GM10248 (cell line): ENCODE measurements at regions of chr11 and their contacts with region 1.

Region 1: DNA sequence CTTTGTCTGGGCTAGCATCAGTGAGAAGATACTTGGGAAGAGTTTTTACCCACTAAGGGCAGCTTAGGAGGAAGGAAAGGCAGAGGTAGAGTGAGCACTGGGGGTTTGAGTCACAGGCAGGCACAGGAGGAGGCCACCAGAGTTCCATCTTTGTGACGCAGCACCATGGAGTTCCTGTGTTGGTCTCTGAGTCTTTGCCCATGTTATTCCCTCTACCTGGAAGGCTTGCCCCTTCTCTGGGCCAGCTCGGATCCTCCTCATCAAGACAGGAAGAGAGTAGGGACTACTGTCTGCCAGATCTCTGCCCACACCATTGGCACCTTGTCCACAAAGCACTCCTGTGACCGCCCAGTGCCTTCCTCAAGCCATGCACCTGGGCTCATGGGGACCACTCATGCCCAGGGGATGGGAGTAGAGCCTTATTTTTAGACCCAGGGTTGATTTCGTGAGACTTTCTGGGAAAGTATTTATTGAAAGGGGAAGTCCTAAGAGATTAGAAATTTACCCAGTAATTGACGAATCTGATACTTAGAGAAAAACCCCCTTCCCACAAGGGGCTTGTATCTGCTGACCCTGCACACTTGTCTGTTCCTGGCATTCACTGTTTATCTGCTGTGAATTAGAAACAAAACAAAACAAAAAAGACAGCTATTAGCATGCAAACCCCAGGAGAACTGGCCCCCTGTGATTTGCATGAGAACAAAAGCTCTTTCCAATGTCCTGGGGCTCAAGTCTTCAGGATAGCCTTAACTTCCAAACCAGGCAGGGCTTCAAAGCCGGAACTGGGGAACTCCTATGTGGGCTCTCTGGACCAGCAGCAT is 35.9 kb upstream of the MYEOV start:
- DNase-seq: peak; percentile 42
- CTCF ChIP-seq: peak; percentile 5

Region 2: DNA sequence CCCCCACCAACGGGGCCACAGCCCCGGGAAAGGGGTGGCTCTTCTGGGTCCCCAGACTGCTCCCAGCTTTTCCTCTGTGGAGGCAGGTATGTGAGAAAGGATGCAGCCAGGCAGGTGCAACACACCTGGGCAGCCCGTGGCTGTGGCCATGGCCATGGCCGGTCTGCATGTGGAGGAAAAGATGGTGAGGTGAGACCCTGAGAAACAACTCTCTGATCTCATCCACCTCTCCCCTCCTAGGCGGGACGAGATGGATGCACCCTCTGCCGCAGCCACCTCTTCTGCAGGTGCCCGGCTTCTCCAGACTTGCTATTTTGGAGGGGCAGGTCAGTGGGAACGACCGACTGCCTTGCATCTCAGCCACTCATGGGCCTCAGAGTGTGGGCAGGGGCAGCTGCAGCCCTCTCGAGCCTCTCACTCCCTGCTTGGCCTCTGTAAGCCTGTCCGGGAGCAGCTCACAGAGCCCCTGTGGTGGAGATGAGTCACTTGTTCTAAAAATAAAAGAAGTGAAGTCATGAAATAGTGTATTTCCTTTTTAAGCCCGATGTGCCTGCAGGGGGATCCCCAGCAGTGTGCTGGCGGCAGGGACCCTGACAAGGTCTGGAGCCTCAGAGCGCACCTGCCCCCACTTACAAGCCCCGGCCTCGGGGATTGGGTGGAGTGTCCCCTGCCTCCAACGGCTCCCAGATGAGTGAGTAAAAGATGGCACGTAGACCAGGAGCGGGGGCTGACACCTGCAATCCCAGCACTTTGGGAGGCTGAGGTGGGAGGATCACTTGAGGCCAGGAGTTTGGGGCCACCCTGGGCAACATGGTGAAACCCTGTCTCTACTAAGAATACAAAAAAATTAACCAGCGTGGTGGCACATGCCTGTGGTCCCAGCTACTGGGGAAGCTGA is 91.6 kb before region 1 on chr11:
- CTCF ChIA-PET with region 1: no interaction called
- POLR2A ChIA-PET with region 1: no interaction called
- DNase-seq: peak; percentile 91
- CTCF ChIP-seq: no peak

Region 3: GRCh38 chr11:69217276-69218105 is 40.6 kb before region 1 on chr11:
- CTCF ChIA-PET with region 1: no interaction called
- POLR2A ChIA-PET with region 1: no interaction called
- DNase-seq: no peak
- CTCF ChIP-seq: no peak

Region 4: GRCh38 chr11:69240332-69241074 is 17.5 kb before region 1 on chr11:
- CTCF ChIA-PET with region 1: interaction called, 13 read pairs
- POLR2A ChIA-PET with region 1: no interaction called
- DNase-seq: no peak
- CTCF ChIP-seq: no peak

Region 5: DNA sequence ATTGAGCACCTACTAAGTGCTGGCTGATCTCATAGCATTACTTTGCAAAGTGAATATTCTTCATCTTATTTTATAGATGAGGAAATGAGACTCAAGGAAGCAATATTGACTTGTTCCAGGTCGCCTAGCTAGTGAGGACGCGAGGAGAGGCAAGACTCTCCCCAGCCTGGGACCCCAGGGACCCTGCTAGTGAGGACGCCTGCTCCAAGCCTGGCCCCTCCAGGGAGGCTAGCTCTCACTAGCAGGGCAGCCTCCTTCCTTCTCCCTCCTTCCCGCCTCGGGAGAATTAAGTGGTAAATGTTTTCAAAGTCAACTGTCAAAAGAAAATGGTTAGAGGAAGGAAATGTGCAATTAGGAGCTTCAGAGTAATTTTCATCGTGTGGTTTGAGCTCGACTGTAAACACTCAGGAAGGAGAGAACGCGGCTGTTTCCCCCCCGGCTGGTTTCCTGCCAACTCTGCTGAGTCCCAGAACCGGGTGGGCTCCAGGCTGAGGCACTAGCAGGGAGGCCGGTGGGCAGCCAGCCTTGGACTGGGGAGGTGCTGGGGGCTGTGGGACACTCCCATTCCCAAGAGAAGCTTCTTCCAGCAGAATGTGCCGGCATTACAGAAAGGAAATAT is 53.8 kb after region 1 on chr11:
- CTCF ChIA-PET with region 1: no interaction called
- POLR2A ChIA-PET with region 1: no interaction called
- DNase-seq: no peak
- CTCF ChIP-seq: no peak

Region 6: GRCh38 chr11:69352715-69353325 is 94.8 kb after region 1 on chr11:
- CTCF ChIA-PET with region 1: no interaction called
- POLR2A ChIA-PET with region 1: no interaction called
- DNase-seq: no peak
- CTCF ChIP-seq: no peak